ENCODE measurements at regions of chr6 and their contacts with region 1.

Region 1: DNA sequence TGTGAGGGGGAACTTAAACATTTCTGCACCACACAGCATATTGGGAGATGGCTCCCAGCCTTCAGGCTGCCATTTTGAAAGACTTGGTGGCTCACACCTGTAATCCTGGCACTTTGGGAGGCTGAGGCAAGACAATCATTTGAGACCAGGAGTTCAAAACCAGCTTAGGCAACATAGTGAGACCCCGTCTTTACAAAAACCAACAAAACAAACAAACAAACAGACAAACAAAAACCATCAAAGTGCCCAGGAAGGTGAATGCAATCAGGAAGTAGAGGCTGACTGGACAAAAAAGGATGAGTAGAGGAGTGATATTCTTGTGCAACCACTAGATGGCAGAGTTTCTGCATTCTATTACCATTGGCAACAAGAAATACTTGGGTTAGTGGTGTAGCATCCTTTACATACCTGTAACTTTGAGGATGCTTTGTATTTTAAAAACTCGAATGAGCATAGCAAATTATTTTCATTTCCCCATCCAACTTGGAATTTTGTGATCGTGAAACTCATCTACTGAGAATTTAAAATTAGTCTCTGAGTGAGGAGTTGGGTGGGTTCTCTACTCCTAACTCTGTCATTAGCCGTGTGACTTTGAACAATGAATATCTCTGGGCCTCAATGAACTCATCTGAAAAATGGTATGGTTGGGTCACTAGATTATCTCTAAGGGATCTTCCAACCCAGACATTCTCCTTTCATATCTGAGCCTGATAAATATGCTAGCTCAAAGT is 84.4 kb downstream of the CRYBG1 start:
- DNase-seq: peak; percentile 23
- H3K4me3 Mint-ChIP-seq: no peak overlapping the region
- H3K27ac Mint-ChIP-seq: no peak overlapping the region
- H3K4me1 Mint-ChIP-seq: peaks cover 16% of the 10 kb centered on the region
- H3K27me3 Mint-ChIP-seq: peaks cover 15% of the 10 kb centered on the region

Region 2: DNA sequence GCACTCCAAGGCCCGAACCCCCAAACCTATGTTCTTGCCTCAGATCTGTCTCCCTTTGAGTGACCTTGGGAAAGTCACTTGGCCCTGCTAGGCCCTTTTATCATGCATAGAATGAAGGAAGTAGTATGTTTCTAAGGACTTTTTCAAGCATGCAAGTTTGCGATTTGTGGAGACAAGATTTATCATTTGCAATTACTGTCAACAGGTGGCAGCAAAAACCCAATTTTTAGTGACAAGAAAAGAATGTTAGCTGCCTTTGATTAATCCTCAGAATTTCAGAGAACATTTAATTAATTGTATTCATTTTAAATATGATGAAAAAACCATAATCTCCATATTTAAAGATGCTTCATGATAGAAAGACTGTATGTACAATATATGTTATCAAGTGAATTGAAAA is 1013.7 kb before region 1 on chr6:
- CTCF ChIA-PET with region 1: no interaction called
- intact Hi-C with region 1: loop called (anchors 5 kb)
- DNase-seq: peak; percentile 10
- H3K4me3 Mint-ChIP-seq: no peak overlapping the region
- H3K27ac Mint-ChIP-seq: no peak overlapping the region
- H3K4me1 Mint-ChIP-seq: no peaks in the 10 kb centered on the region
- H3K27me3 Mint-ChIP-seq: peaks cover 7% of the 10 kb centered on the region

Region 3: DNA sequence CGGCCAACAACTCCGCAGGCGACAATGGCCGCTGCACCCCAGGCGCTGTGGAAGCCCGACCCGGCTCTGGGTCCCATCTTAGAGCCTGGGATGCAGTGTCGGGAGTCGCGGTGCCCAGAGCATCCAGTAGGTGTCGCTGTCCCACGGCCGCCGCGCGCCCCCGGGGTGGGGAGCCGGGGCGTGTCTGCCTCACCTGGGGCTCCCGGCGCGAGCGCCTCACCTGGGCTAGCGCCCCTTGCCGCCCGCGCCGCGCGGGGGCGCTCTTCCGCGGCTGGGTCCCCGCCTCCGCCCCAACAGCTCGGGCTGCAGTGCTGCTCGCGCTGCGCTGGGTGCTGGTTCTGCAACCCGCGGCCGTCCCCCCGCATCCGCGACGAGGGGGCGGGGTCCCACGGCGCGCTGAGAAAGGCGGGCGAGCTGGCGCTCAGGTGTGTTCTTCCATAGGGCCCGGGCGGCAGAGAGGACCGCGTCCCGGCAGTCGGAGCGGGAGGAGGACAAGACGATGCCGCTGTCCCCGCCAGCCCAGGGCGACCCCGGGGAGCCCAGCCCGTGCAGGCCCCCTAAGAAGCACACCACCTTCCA is 84.4 kb before region 1 on chr6 and contains the start of gene CRYBG1:
- CTCF ChIA-PET with region 1: interaction called, 3 read pairs
- intact Hi-C with region 1: loop called (anchors 1 kb)
- DNase-seq: peak; percentile 78
- H3K4me3 Mint-ChIP-seq: peak within 1 kb of the TSS; percentile 71
- H3K27ac Mint-ChIP-seq: no peak within 1 kb of the TSS
- H3K4me1 Mint-ChIP-seq: peaks cover 9% of the 10 kb centered on the region
- H3K27me3 Mint-ChIP-seq: peaks cover 40% of the 10 kb centered on the region
- total RNA-seq, gene CRYBG1: 12.9 to 13.0 TPM

Region 4: DNA sequence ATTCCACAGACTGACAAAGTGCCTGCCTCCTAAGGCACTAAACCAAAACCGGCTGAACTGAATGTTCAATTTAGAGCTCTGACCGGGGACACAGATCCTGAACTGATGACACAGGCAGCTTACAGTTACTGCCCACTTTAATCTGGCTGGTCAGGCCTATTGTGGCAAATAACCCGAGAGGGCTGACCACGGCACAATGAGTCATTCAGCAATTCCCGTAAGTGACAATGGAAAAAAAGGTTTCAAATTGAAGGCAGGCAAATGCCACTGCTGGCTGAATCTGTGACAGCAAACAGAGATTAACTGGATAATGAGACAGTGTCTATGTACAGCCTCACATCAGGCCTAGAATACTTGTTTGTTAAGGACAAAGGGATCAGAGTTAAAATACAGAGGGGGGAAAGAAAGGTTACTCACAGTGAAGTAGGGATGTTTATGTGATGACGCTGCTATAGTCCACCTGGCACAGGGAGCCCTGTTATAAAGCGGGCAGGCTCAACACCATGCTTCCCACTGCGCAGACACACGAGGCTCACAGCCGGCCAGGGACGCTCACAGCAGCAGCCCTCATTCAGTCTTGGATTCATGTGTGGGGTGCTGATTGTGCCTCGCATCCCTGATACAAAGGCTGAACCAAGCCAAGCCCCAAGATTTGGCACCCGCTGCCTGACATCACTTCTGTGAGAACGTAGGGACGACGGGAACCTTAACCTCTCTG is 130.0 kb after region 1 on chr6:
- CTCF ChIA-PET with region 1: interaction called, 361 read pairs
- intact Hi-C with region 1: no loop called
- DNase-seq: no peak
- H3K4me3 Mint-ChIP-seq: no peak overlapping the region
- H3K27ac Mint-ChIP-seq: no peak overlapping the region
- H3K4me1 Mint-ChIP-seq: peaks cover 3% of the 10 kb centered on the region
- H3K27me3 Mint-ChIP-seq: no peaks in the 10 kb centered on the region

Region 5: GRCh38 chr6:106979427-106979884 is 534.5 kb after region 1 on chr6:
- CTCF ChIA-PET with region 1: interaction called, 9 read pairs
- intact Hi-C with region 1: loop called (anchors 1 kb)
- DNase-seq: peak; percentile 87
- H3K4me3 Mint-ChIP-seq: no peak overlapping the region
- H3K27ac Mint-ChIP-seq: no peak overlapping the region
- H3K4me1 Mint-ChIP-seq: no peaks in the 10 kb centered on the region
- H3K27me3 Mint-ChIP-seq: peaks cover 33% of the 10 kb centered on the region